WTC11 (cell line): ENCODE measurements at regions of chr16 and their contacts with region 1.

Region 1: GRCh38 chr16:4402439-4403132 is 13.8 kb downstream of the CORO7 start:
- DNase-seq: peak; percentile 94
- ATAC-seq: peak; percentile 77
- H3K4me3 Mint-ChIP-seq: peak overlapping the region; percentile 30
- H3K27ac Mint-ChIP-seq: no peak overlapping the region
- H3K4me1 Mint-ChIP-seq: peaks cover 6% of the 10 kb centered on the region
- H3K27me3 Mint-ChIP-seq: no peaks in the 10 kb centered on the region
- CTCF ChIP-seq: peak; percentile 97

Region 2: DNA sequence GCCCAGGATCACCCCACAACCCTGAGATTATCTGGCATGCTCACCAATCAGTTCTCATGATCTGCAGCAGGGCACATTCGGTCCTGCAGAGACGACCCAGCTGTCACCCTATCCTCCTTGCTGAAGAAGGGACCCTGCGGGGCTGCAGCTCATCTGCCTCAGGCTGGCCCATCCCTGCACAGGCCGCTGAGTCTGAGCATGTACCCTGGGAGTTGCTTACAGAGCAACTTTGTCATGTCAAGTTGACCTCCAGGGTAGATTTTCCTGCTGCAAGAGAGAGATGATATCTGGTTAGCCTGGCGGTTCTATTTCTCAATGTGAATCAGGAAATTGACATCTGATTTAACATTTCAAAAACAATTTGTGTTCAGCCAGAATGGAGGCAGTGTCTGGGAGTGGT is 250.3 kb before region 1 on chr16:
- CTCF ChIA-PET with region 1: no interaction called
- POLR2A ChIA-PET with region 1: no interaction called
- DNase-seq: no peak
- ATAC-seq: no peak
- H3K4me3 Mint-ChIP-seq: no peak overlapping the region
- H3K27ac Mint-ChIP-seq: no peak overlapping the region
- H3K4me1 Mint-ChIP-seq: no peaks in the 10 kb centered on the region
- H3K27me3 Mint-ChIP-seq: no peaks in the 10 kb centered on the region
- CTCF ChIP-seq: no peak

Region 3: GRCh38 chr16:4261557-4262172 is 140.9 kb before region 1 on chr16:
- CTCF ChIA-PET with region 1: interaction called, 33 read pairs
- POLR2A ChIA-PET with region 1: no interaction called
- DNase-seq: peak; percentile 90
- ATAC-seq: peak; percentile 64
- H3K4me3 Mint-ChIP-seq: no peak overlapping the region
- H3K27ac Mint-ChIP-seq: peak overlapping the region; percentile 93
- H3K4me1 Mint-ChIP-seq: peaks cover 29% of the 10 kb centered on the region
- H3K27me3 Mint-ChIP-seq: no peaks in the 10 kb centered on the region
- CTCF ChIP-seq: peak; percentile 99

Region 4: DNA sequence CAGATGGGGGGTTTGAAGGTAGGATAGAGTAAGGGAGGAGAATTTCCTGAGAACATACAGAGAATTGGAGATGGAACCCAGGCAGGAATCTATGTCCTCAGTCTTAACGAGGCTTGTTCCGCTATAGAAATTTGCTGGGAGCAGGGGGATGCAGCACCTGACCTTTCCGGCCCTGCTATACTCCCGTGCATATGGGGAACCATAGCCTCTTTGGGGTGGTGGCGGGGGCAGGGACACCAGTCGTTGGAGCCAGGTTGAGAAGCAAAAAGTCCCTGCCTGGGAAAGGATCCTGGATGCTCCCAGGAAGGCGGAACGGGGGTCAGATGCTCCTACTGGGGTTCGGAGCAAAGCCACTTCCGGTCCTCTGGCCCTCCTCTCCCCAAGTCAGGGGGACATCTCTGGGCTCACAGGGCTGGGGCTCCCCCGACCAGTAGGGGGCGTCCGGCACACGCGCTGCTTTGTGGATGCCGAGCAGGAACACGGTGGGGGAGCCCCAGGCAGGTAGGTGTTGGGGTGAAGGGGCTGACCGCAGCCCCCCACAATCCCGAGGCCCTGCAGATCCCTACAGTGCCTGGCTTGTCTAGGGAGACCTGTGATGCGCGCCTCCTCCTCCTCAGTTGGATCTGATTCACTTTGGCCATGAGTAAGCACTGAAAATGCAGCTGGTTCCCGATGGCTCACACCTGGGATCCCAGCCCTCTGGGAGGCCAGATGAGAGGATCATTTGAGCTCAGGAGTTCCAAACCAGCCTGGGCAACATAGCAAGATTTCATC is 114.3 kb before region 1 on chr16:
- CTCF ChIA-PET with region 1: interaction called, 22 read pairs
- POLR2A ChIA-PET with region 1: no interaction called
- DNase-seq: peak; percentile 95
- ATAC-seq: peak; percentile 92
- H3K4me3 Mint-ChIP-seq: no peak overlapping the region
- H3K27ac Mint-ChIP-seq: peak overlapping the region; percentile 76
- H3K4me1 Mint-ChIP-seq: peaks cover 35% of the 10 kb centered on the region
- H3K27me3 Mint-ChIP-seq: no peaks in the 10 kb centered on the region; the same call in 1 of the 2 replicates
- CTCF ChIP-seq: peak; percentile 95

Region 5: GRCh38 chr16:4330277-4330874 is 72.2 kb before region 1 on chr16:
- CTCF ChIA-PET with region 1: interaction called, 91 read pairs
- POLR2A ChIA-PET with region 1: no interaction called
- DNase-seq: peak; percentile 86
- ATAC-seq: peak; percentile 27
- H3K4me3 Mint-ChIP-seq: no peak overlapping the region
- H3K27ac Mint-ChIP-seq: no peak overlapping the region
- H3K4me1 Mint-ChIP-seq: peaks cover 18% of the 10 kb centered on the region
- H3K27me3 Mint-ChIP-seq: no peaks in the 10 kb centered on the region
- CTCF ChIP-seq: peak; percentile 93

Region 6: GRCh38 chr16:4350787-4351659 is 51.6 kb before region 1 on chr16 and contains the start of gene PAM16:
- CTCF ChIA-PET with region 1: interaction called, 102 read pairs
- POLR2A ChIA-PET with region 1: interaction called, 3 read pairs
- DNase-seq: peak; percentile 99
- ATAC-seq: peak; percentile 96
- H3K4me3 Mint-ChIP-seq: peak within 1 kb of the TSS; percentile 95
- H3K27ac Mint-ChIP-seq: peak within 1 kb of the TSS; percentile 70
- H3K4me1 Mint-ChIP-seq: peaks cover 11% of the 10 kb centered on the region
- H3K27me3 Mint-ChIP-seq: 0 out of 2 replicates have a peak, but pooled peaks cover 3% of the 10 kb centered on the region
- CTCF ChIP-seq: no peak
- total RNA-seq, gene PAM16: 87.2 to 93.7 TPM (median 88.9 TPM) in 3 replicates

Region 7: GRCh38 chr16:4365014-4365406 is 37.6 kb before region 1 on chr16:
- CTCF ChIA-PET with region 1: interaction called, 322 read pairs
- POLR2A ChIA-PET with region 1: interaction called, 3 read pairs
- DNase-seq: no peak
- ATAC-seq: no peak
- H3K4me3 Mint-ChIP-seq: no peak overlapping the region
- H3K27ac Mint-ChIP-seq: no peak overlapping the region
- H3K4me1 Mint-ChIP-seq: no peaks in the 10 kb centered on the region
- H3K27me3 Mint-ChIP-seq: no peaks in the 10 kb centered on the region
- CTCF ChIP-seq: no peak

Region 8: DNA sequence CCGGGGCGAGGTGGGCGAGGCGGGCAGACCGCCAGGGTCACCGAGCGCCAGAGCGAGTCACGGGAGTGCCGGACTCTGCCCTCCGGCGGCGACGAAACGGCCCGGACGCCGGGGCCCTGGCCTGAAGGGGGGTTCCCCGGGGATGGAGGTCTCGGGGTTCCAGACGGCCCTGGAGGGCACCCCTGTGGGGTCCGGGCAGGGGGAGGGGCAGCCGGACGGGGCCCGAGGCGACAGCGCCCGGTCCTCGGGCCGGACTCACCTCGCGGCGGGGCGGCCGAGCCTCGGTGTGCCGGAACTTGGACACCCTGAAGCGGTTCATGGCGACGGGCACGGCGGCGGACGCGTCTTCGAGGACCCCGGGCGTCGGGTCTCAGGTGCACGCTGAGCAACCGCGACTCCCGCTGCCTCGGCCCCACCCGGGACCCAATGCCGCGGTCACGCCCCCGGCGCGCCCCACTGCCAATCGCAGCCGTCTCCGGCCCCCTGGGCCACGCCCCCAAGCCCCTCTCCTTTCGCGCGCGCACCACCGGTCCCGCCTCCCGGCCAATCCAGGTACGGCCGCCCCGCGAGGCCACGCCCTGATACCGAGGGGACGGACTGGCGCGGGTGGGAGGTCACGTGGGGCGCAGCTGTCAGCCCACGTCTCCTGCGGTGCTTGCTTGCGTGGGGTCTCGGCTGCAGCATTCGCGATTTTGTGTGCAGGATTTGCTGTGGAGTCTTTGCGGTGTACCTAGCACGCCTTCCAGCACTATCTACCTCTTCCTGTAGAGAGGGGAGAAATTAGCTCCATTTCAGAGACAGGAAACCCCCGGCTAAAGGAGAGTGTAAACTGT is 13.8 kb after region 1 on chr16 and contains the start of gene CORO7:
- CTCF ChIA-PET with region 1: interaction called, 102 read pairs
- POLR2A ChIA-PET with region 1: interaction called, 5 read pairs
- DNase-seq: peak; percentile 92
- ATAC-seq: peak; percentile 94
- H3K4me3 Mint-ChIP-seq: peak within 1 kb of the TSS; percentile 74
- H3K27ac Mint-ChIP-seq: peak within 1 kb of the TSS; percentile 28; the same call in 1 of the 2 replicates
- H3K4me1 Mint-ChIP-seq: peaks cover 5% of the 10 kb centered on the region
- H3K27me3 Mint-ChIP-seq: peaks cover 15% of the 10 kb centered on the region
- CTCF ChIP-seq: no peak
- total RNA-seq, gene CORO7: 36.7 to 45.5 TPM (median 38.6 TPM) in 3 replicates

Region 9: GRCh38 chr16:4664538-4665418 is 262.2 kb after region 1 on chr16:
- CTCF ChIA-PET with region 1: no interaction called
- POLR2A ChIA-PET with region 1: no interaction called
- DNase-seq: no peak
- ATAC-seq: peak; percentile 38
- H3K4me3 Mint-ChIP-seq: no peak overlapping the region
- H3K27ac Mint-ChIP-seq: peak overlapping the region; percentile 89
- H3K4me1 Mint-ChIP-seq: peaks cover 4% of the 10 kb centered on the region
- H3K27me3 Mint-ChIP-seq: no peaks in the 10 kb centered on the region
- CTCF ChIP-seq: no peak